ENCODE measurements at regions of chr18 and their contacts with region 1.

Region 1: DNA sequence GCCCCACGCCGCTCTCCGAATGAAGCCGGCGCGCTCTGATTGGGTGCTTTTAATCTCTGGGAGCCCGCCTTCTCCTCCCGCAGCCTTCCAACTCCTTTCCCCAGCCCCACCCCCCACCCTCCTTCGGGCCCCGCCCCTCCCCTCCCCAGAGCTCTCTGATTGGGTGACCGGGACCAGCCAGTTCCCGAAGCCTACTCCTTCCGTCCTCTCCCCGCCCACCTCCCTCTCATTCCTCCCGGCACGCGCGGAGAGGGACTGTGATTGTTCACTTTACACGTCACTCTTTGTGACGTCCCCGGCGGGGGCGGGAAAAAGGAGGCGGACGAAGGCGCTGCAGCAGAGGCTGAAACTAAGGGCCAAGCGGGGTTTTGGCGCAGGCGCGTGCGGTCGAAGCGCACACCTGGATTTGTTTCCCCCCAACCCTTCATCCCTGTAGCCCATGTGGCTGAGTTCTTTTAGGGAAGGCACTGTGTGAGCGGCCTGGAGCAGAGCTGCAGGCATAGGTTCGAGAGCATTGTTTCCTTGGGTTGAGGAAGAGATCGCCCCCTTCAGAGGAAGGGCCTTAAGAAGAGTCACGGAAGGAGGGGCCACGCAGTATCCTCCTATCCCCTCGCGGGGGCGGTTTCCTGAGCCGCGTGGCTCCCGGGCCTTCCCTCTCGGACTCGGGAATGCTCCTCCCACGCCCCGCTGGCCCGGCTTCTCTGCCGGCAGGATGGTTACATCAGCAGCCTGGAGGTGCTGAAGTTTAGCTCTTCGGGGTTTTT is at the start of gene MEX3C:
- DNase-seq: peak; percentile 99
- ATAC-seq: peak; percentile 96
- total RNA-seq, gene MEX3C: 20.5 TPM

Region 2: GRCh38 chr18:50917021-50917420 is 280.8 kb before region 1 on chr18:
- intact Hi-C with region 1: no loop called
- DNase-seq: no peak
- ATAC-seq: no peak

Region 3: DNA sequence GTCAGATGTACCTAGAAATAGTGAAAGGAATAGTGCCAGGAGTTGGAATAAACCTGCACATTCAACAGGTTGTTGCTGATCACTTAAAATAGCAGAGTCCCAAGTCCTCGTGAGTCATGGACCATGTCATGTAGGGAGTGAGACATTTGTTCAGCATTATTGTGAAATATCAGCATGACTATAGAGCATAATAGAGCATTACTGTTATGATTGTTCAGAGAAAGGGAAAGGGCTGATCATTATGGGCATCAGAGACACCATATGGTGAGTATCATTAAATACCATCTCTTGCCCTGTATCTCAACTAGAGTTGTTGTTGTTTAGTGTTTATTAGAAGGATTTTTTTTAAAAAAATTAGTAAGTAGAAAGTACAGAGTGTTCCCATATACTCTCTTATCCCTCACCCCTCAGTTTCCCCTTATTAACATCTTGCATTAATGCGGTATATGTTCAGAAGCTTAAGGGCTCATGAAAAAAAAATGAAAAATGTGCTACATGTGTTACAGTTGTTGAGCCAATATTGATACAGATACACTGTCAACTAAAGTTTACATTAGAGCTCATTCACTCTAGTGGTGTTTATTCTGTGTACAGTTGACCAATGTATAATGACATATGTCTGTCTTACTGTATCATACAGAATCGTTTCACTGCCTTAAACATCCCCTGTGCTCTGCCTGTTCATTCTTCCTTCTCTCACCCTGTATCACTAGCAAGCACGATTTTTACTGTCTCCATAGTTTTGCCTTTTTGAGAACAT is 224.3 kb before region 1 on chr18:
- intact Hi-C with region 1: loop called (anchors 10 kb)
- DNase-seq: no peak
- ATAC-seq: peak; percentile 47

Region 4: DNA sequence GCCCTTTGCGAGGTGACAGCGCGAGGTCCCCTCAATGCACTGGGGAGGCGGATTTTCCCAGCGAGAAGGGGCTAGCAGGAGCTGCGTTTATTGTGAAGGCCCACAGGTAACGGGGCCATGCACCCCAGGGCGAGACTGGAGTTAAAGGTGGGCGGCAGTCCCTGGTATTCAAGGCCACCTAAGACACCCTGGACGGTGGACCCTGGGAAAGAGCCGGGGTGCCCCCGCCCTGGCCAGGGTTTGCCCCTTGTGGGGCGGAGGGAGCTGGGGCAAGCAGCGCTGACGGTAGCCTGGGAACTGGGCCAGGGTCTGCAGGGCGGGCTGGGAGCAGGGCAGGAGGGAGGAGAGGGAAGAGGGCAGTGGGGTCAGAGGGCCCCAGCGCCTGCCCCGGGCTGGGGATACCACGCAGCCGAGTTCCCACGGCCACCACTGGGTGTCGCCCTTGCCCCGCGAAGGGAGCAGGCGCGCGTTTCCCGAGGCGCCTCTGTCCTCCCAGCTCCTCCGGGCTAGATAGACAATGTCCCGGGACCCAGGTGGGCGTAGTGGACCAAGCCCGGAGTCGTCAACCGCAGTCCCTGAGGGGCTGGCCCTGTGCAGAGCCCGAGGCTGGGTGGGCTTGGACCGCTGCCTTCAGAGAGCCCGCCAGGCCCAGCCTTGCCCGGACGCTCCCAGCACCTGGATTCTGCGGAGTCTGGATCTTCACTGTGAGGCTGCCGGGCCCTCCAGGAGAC is 87.6 kb before region 1 on chr18:
- intact Hi-C with region 1: loop called (anchors 10 kb)
- DNase-seq: peak; percentile 79
- ATAC-seq: peak; percentile 87

Region 5: GRCh38 chr18:51251625-51252024 is 53.8 kb after region 1 on chr18:
- intact Hi-C with region 1: no loop called
- DNase-seq: no peak
- ATAC-seq: no peak

Region 6: DNA sequence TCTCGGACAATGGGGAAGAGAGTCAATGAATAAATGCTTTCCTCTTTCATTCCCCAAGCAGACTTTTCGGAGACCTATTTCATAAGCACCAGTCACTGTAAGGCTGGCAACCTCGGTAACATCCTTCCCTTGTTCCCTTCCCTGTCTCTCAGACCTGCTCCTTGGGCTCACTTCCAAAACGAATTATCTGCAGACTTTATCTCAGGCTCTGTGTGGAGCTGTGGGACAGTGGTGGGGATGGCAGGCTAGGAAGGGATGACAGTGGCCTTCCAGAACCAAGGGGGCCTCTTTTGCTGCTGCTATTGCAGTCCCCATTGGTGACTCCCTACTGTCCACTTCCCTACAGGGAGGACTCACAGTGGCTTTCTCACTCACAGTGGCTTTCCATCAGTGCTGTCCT is 185.3 kb after region 1 on chr18:
- intact Hi-C with region 1: loop called (anchors 10 kb)
- DNase-seq: no peak
- ATAC-seq: no peak